Mammary epithelial cell (primary cell): ENCODE measurements at regions of chr5 and their contacts with region 1.

Region 1: DNA sequence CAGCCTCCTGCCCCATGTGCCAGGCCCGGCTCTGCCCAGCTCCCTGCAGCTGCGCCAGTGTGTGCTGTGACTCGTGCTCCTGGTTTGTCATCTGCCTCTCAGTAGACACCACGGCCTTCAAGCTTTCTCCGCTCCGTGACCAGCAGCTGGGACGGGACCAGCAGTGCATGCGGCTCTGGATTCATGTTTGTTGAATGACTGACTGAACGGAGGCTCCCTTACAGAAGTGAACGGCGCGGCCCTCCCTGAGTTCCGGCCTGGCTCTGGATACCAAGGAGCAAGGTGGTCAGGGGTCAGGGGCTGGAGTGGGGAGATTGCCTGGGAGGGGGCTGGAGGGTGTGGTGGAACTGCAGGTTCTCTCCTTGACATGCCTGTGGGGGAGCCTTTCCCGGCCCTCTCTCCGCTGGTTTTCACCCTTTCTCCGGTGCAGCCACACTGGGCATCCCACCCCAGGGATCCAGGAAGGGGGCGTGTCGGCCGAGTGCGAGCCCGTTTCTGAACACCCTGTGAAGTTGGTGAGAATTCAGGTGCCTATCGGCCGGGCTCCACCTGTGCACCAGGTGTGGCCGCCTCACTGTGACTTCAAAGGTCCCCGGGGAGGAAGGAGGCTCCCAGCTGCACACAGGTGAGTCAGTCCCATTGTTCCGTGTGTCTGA is 11.1 kb upstream of the CEP72 start:
- DNase-seq: no peak
- H3K4me3 ChIP-seq: no peak overlapping the region
- H3K27ac ChIP-seq: no peak overlapping the region
- H3K4me1 ChIP-seq: no peaks in the 10 kb centered on the region
- H3K27me3 ChIP-seq: peaks cover 5% of the 10 kb centered on the region
- CTCF ChIP-seq: no peak

Region 2: DNA sequence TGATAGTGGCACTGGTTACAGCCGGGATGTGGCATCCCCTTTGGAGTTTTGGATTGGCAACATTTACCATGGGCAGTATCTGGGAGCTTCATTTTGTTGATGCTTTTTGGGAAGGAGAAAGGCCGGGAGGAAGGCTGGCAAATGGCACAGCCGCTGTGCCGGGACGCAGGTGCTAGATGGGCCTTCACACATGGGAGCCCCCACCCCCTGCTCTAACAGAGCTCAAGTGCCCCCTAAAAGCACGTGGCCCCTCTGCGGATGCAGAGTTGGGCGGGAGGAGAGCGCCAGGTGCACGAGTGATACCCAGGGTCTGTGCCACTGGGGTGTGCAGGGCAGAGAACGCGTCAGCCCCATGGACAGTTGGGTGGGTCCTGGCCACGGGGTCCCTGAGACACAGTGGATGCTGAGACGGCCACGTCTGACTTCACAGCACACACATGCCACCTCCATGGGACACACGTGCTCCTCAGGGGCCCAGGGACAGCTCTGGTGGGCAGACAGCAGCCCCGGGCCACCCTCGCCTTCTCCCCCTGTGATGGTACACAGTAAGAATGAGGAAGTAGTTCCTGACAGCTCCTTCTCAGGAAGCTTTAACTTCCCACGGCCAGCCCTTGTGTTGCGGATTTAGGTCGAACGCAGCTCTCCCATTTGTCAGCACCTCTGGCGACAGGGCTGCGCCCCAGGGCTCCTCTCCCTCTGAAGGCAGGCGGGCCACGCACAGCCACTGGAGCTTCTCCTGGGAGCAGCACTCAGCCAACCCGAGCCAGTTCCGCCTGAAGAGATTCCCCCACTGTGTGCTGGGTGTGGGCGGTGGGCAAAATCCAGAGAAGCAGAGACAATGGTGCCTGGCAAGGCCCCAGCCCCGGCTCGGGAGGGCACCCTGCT is 87.6 kb before region 1 on chr5:
- CTCF ChIA-PET with region 1: no interaction called
- dilution Hi-C with region 1: no loop called
- in situ Hi-C with region 1: no loop called
- intact Hi-C with region 1: no loop called
- DNase-seq: no peak
- H3K4me3 ChIP-seq: no peak overlapping the region
- H3K27ac ChIP-seq: no peak overlapping the region
- H3K4me1 ChIP-seq: peaks cover 7% of the 10 kb centered on the region
- H3K27me3 ChIP-seq: peaks cover 4% of the 10 kb centered on the region
- CTCF ChIP-seq: no peak

Region 3: GRCh38 chr5:538801-539468 is 62.1 kb before region 1 on chr5:
- CTCF ChIA-PET with region 1: no interaction called
- dilution Hi-C with region 1: loop called (anchors 5 kb)
- in situ Hi-C with region 1: no loop called
- intact Hi-C with region 1: no loop called
- DNase-seq: no peak
- H3K4me3 ChIP-seq: no peak overlapping the region
- H3K27ac ChIP-seq: no peak overlapping the region
- H3K4me1 ChIP-seq: no peaks in the 10 kb centered on the region
- H3K27me3 ChIP-seq: peaks cover 15% of the 10 kb centered on the region
- CTCF ChIP-seq: no peak

Region 4: DNA sequence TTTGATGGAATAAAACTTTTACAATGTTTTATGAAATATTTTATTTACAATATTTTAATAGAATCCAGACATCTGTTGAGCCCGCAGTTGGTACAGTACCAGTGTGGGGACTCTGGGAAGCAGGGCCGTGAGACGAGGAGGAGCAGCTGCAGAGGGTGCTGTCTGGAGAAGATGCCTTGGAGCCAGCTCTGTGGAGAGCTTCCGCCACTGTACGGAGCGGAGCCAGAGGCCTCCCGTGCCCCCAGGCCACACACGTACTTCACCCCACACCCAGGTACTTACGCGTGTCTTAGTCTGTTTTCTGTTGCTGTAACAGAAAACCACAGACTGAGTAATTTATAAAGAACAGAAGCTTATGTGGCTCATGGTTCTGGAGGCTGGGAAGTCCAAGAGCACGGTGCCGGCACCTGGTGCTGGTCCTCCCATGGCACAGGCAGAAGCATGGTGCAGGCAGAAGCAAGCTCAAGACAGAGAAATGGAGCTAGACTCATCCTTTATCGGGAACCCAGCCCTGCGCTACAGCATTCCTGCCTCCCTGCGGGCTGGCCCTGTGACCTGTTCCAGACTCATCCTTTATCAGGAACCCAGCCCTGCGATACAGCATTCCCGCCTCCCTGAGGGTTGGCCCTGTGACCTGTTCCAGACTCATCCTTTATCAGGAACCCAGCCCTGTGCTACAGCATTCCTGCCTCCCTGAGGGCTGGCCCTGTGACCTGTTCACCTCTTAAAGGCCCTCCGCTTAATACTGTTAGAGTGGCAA is 34.5 kb after region 1 on chr5:
- CTCF ChIA-PET with region 1: no interaction called
- dilution Hi-C with region 1: loop called (anchors 5 kb)
- in situ Hi-C with region 1: no loop called
- intact Hi-C with region 1: no loop called
- DNase-seq: no peak
- H3K4me3 ChIP-seq: no peak overlapping the region
- H3K27ac ChIP-seq: no peak overlapping the region
- H3K4me1 ChIP-seq: no peaks in the 10 kb centered on the region
- H3K27me3 ChIP-seq: no peaks in the 10 kb centered on the region
- CTCF ChIP-seq: no peak